ENCODE measurements at regions of chr3 and their contacts with region 1.

Region 1: DNA sequence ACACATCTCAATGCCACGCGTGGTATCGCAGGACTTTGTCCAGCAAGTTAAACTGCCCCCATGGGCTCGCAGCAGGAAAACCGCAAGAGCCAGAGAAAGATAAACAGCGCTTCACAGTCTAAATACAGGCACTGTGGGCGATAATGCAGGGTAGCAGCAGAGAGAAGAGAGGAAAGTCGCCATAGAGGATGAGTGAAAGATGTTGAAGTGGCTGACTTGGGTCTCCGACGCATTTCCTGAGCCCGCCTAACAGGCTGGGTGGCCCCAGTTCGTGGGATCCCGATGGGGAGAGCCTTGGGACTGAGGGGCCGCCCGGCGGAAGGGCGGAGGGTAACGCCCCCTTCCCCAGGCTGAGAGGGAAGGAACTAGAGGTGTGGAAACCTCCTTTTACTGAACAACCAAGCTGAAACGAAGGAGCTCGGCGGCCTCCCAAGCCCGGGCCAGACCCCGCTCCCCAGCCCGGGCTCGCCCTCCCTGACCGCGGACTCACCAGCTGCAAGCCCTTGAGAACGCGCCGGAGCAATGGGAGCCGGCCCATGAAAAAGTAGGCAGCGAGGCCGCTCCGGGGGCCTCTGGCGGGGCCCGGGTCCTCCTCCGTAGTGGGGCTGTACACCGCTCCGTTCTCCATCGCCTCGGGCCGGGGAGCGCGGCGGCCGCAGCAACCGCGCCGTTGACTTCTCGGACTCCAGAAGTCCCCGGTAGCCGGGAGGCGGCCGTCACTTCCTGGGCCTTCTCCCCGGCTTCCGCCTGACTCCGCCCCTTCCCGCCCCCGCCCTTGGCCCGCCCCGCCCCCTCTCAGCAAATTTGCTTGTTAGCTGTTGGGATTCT is at the start of gene CMTM6:
- DNase-seq: peak; percentile 66
- H3K4me3 Mint-ChIP-seq: peak within 1 kb of the TSS; percentile 100
- H3K27ac Mint-ChIP-seq: peak within 1 kb of the TSS; percentile 96
- H3K4me1 Mint-ChIP-seq: peaks cover 41% of the 10 kb centered on the region
- H3K27me3 Mint-ChIP-seq: peaks cover 3% of the 10 kb centered on the region
- total RNA-seq, gene CMTM6: 94.2 and 96.4 TPM in 2 replicates

Region 2: DNA sequence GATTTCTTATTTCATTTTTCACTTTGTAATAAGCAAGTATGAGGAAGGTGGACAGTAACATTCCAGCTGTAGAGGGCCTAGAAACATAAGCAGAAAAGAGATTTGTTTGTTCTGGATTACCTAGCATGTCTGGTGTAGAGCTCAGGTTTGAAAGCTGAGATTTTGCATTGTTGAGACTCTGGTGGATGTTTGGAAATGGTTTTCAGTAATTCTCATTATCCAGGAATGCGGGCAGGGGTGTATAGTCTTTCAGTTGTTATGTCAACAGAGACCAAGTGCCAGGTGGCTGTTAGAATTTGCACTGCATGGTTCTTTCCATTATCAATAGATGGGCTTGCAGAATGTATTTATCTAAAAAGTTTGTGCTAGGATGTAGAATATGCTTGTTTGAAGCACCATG is 385.0 kb before region 1 on chr3:
- intact Hi-C with region 1: loop called (anchors 5 kb)
- DNase-seq: no peak
- H3K4me3 Mint-ChIP-seq: no peak overlapping the region
- H3K27ac Mint-ChIP-seq: no peak overlapping the region
- H3K4me1 Mint-ChIP-seq: peaks cover 34% of the 10 kb centered on the region
- H3K27me3 Mint-ChIP-seq: no peaks in the 10 kb centered on the region

Region 3: GRCh38 chr3:32296256-32297204 is 205.8 kb before region 1 on chr3:
- intact Hi-C with region 1: no loop called
- DNase-seq: peak; percentile 52
- H3K4me3 Mint-ChIP-seq: peak overlapping the region; percentile 43
- H3K27ac Mint-ChIP-seq: peak overlapping the region; percentile 84
- H3K4me1 Mint-ChIP-seq: peaks cover 43% of the 10 kb centered on the region
- H3K27me3 Mint-ChIP-seq: no peaks in the 10 kb centered on the region

Region 4: DNA sequence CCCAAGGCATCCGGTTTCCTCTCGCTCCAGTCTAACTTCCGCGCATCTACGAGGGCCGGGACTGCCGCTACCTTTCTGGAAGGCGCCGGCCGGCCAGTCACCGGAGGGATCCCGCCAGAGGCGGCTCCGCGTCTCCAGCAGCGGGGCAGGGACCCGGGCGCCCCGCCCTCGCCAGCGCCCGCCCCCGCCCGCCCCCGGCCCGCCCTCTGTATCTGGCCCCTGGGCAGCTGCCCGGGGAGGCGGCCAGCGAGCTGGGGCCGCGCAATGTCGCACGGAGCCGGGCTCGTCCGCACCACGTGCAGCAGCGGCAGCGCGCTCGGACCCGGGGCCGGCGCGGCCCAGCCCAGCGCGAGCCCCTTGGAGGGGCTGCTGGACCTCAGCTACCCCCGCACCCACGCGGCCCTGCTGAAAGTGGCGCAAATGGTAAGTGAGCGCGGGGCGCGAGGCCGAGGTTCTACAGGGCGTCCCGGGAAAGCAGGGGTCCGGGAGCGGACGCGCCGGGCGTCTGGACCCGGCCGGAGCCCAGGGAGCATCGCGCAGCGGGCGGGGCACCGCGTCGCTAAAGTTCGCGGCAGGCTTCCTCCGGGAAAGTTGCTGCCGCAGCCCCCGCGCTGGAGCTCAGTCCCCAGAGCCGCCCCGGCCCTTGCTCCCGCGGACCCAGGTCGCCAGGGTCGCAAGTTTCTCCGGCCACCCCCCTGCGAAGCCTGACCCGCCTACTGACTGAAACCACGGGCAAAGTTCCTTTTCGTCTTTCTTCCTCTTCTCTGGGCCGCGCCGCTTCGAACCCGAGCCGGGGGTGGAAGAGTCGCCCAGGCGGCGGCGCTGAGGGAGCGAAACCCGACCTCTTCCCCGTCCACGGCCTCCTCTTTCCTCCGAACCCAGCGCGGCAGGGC is 110.4 kb before region 1 on chr3 and contains the start of gene CMTM7:
- intact Hi-C with region 1: loop called (anchors 1 kb)
- DNase-seq: peak; percentile 66
- H3K4me3 Mint-ChIP-seq: peak within 1 kb of the TSS; percentile 98
- H3K27ac Mint-ChIP-seq: peak within 1 kb of the TSS; percentile 98
- H3K4me1 Mint-ChIP-seq: peaks cover 61% of the 10 kb centered on the region
- H3K27me3 Mint-ChIP-seq: no peaks in the 10 kb centered on the region
- total RNA-seq, gene CMTM7: 50.6 and 59.7 TPM in 2 replicates

Region 5: DNA sequence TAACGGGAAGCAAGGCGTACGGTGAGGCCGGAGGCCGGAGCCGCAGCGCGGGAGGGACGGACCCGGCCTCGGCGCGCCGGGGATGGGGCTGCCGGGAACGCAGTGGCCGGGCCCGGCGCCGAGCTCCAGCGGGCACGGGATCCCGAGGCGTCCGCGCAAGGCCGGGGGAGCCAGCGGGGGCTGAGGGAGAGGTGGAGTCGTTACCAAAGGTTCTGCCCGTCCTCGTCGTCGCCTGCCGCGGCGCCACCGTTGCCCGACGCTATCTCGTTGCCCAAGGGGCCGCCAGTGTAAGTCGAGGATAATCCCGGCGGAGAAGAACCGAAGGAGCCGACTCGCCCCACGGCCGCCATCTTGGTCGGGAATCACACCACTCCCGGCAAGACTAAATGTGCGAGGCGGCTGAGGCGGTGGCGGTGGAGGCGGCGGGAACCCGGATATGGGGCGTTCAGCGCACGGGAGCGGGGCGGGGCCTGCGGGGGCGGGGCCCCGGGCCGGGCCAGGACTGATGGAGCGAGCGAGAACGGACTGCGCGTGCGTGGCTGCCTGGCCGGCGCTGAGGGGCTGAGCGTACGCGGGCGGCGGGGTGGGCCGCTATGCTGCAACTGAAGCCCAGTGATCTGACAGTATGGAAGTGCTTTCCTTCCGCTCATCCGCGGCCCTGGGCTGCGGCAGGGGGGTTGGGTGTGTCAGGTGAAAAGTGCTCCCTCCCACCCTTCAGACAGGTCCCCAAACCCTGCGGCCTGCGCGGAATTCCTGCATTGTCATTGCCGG is 68.3 kb after region 1 on chr3 and contains the start of gene DYNC1LI1:
- intact Hi-C with region 1: loop called (anchors 1 kb)
- DNase-seq: peak; percentile 90
- H3K4me3 Mint-ChIP-seq: peak within 1 kb of the TSS; percentile 91
- H3K27ac Mint-ChIP-seq: peak within 1 kb of the TSS; percentile 88
- H3K4me1 Mint-ChIP-seq: peaks cover 22% of the 10 kb centered on the region
- H3K27me3 Mint-ChIP-seq: no peaks in the 10 kb centered on the region
- total RNA-seq, gene DYNC1LI1: 35.9 and 43.3 TPM in 2 replicates

Region 6: GRCh38 chr3:33096093-33096868 is 593.9 kb after region 1 on chr3:
- intact Hi-C with region 1: loop called (anchors 10 kb)
- DNase-seq: peak; percentile 39
- H3K4me3 Mint-ChIP-seq: peak overlapping the region; percentile 97
- H3K27ac Mint-ChIP-seq: peak overlapping the region; percentile 86
- H3K4me1 Mint-ChIP-seq: peaks cover 43% of the 10 kb centered on the region
- H3K27me3 Mint-ChIP-seq: peaks cover 2% of the 10 kb centered on the region

Region 7: GRCh38 chr3:33287672-33288282 is 785.4 kb after region 1 on chr3:
- intact Hi-C with region 1: no loop called
- DNase-seq: no peak
- H3K4me3 Mint-ChIP-seq: no peak overlapping the region
- H3K27ac Mint-ChIP-seq: no peak overlapping the region
- H3K4me1 Mint-ChIP-seq: no peaks in the 10 kb centered on the region
- H3K27me3 Mint-ChIP-seq: peaks cover 9% of the 10 kb centered on the region

Measured in activated T-helper 1 cell treated with anti-CD3 and anti-CD28 coated beads, Interleukin-12 subunit alpha, Interleukin-12 subunit beta, Interleukin-2, Interleukin-4 antibody, amounts not matched to agents 30 ng/mL and 10 ng/mL and 1 ng/mL, durations not matched to agents 14 hours and 24 hours and 36 hours (primary cell).